Posterior vena cava (tissue), 2 donors: ENCODE measurements at regions of chr18 and their contacts with region 1.

Region 1: DNA sequence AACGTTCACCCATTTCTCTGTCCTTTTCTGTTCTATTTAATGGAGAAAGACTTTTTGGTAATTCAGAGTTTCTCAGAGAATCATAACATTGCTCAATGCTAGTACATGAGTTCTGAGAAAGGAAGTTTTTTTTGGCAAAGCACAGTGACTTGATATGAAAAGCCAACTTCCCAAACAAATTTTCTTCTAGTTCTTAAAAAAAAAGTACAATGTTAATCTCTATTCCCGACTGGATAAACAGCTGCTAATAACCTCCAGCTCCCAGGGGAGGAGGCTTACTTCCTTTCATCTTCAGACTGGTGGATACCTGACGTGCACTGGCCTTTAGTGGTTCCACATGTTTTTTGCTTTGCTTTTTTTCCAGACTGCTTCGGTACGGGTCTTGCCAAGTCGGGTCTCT is 284.6 kb upstream of the CCDC68 start:
- DNase-seq: no peak

Region 2: GRCh38 chr18:55189972-55190371 is 53.9 kb before region 1 on chr18:
- intact Hi-C with region 1: no loop called
- DNase-seq: no peak

Region 3: DNA sequence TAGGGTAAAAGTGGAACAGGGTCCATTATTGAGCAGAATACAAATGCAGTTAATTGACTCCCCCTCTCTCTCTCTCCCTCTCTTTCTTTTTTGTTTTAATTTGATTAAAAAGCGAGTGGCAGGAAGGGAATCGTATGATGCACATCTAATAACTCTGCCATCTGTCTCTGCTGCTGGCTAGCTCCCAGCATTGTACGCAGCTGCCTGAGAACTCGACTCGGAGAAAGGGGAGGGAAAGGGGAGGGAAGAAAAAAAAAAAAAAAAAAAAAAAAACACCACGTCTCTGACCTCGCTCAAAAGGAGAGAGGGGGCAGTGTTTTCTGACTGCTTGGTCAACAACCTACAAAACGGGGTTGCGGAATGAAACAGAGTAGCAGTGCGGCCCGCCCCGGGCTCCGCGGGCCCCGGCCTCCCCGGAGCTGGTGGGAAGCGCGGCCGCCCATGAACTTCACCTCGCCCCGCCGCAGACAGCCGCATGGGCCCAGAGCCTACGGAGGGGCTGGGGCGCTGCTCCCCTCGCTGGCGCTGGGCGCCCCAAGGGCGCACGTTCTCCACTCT is 78.4 kb after region 1 on chr18:
- intact Hi-C with region 1: loop called in 1 of 2 experiments (anchors 10 kb)
- DNase-seq: peak; percentile 96